ENCODE measurements at regions of chr1 and their contacts with region 1.

Region 1: GRCh38 chr1:162035241-162035640 is 11.6 kb upstream of the OLFML2B start:
- DNase-seq: no peak
- H3K4me3 ChIP-seq: no peak overlapping the region
- H3K27me3 ChIP-seq: peaks cover 2% of the 10 kb centered on the region
- CTCF ChIP-seq: no peak

Region 2: DNA sequence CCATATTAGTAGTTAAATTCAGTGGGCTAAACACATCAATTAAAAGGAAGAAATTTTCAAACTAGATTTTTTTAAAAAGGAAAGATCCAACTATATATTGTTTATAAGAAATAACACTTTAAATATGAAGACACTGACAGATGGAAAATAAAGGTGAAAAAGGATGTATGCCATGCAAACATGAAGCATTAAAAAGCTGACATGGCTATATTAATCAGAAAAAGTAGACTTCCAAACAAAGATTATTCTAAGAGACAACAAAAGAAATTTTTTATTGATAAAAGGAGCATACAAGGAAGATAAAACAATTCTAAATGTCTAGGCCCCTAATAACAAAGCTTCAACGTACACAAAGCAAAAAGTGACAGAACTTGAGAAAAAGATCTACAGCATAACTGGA is 177.0 kb before region 1 on chr1:
- CTCF ChIA-PET with region 1: interaction called, 72 read pairs
- POLR2A ChIA-PET with region 1: no interaction called
- DNase-seq: no peak
- H3K4me3 ChIP-seq: no peak overlapping the region
- H3K27me3 ChIP-seq: no peaks in the 10 kb centered on the region
- CTCF ChIP-seq: no peak

Region 3: GRCh38 chr1:161864577-161864976 is 170.7 kb before region 1 on chr1:
- CTCF ChIA-PET with region 1: interaction called, 72 read pairs
- POLR2A ChIA-PET with region 1: no interaction called
- DNase-seq: no peak
- H3K4me3 ChIP-seq: no peak overlapping the region
- H3K27me3 ChIP-seq: no peaks in the 10 kb centered on the region
- CTCF ChIP-seq: peak; percentile 55

Region 4: DNA sequence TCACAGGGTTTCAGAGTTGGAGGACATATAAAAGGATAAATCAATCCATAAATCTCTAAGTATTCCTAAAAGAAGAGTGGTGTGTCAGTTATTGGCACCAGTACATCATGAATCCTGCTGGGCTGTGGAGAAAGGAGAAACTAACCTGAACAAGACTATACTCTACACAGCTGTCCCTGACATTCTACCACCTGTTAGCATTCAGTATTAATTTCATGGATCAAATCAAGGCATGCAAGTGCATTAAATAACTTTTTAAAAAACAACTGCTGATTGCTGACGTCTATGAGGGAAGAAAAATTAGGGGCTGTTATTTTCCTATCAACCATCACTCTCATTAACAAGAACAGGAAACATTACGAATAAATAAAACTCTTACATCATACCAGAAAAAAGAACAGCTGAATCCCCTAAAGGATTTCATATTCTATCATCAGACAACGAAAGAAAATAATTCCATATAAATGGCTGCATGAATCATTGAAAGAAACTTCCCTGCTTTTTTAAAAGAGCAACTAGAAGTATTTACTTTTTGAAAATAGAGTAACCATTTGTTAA is 147.4 kb before region 1 on chr1:
- CTCF ChIA-PET with region 1: interaction called, 7 read pairs
- POLR2A ChIA-PET with region 1: interaction called, 12 read pairs
- DNase-seq: no peak
- H3K4me3 ChIP-seq: no peak overlapping the region
- H3K27me3 ChIP-seq: no peaks in the 10 kb centered on the region
- CTCF ChIP-seq: no peak

Region 5: DNA sequence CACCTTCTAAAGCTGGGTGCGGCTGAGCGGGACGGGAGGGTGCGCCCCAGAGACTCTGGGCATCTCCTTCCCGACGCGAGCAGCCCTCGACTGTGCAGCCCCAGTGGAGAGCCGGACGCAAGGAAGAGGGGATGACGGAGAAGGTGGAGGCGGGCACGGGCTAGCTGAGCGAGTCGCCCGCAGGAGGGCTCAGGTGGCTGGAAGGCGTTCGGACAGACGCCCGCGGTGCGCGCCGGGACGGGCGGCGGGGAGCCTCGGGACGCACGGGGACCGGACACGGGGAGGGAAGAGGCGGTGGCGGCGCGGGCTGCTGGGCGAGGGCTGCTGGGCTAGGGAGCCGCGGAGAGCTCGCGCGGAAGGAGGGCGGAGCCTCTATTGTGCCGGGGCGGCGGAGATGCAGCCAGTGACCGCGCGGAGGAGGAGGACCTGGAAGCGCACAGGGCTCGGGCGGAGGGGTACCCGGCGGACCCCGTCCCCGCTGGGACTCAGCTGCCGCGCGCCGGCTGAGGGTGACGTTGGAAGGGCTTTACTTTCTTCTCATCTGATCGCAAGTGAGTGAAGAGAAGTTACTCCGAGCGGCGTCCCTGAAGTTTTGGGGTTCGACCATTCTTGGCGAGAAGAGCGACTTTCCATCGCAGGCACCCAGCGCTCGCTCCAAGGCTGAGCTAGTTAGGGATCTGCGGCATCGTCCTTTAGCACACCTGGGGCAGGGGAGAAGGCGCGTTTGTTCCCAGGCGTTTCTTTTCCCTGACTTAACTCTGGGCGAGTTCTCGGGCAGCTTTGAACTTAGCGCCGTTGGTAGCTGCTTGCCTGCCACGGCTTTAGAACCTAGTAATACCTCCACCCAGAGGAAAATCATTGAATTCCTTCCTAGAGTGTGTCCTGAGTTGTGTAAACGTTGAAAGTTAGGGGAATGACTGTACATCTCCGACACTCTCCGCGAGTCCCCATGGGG is 11.4 kb before region 1 on chr1 and contains the start of gene OLFML2B:
- CTCF ChIA-PET with region 1: interaction called, 16 read pairs
- POLR2A ChIA-PET with region 1: no interaction called
- DNase-seq: peak; percentile 55
- H3K4me3 ChIP-seq: peak within 1 kb of the TSS; percentile 53
- H3K27me3 ChIP-seq: no peaks in the 10 kb centered on the region; the same call in 1 of the 2 replicates
- CTCF ChIP-seq: peak; percentile 51
- polyA plus RNA-seq, gene OLFML2B: 1.6 and 3.5 TPM in 2 replicates

Region 6: DNA sequence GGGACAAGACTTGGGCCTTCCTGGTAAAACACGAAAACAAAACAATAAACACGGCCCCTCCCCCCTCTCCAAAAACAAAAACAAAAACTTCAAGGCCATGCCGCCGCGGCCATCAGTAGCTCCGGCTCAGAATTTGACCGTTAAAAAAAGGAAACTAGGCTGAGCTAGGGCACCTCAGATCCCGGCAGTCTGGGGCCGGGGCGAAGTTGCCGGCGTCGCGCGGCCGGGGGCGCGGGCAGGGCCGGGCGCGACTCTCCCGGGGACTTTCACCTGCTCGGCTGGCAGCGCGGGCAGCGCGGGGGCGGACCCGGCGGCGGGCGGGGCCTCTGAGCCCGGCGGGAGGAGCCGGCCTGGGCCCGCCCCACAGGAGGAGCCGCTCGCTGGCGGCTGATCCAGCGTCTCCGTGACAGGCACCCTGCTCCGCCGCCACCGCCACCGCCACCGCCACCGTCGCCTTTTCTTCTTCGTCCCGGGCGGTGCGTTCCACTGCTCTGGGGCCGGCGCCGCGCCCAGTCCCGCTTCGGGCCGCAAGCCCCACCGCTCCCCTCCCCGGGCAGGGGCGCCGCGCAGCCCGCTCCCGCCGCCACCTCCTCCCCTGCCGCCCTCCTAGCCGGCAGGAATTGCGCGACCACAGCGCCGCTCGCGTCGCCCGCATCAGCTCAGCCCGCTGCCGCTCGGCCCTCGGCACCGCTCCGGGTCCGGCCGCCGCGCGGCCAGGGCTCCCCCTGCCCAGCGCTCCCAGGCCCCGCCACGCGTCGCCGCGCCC is 34.3 kb after region 1 on chr1 and contains the start of gene NOS1AP:
- CTCF ChIA-PET with region 1: no interaction called
- POLR2A ChIA-PET with region 1: no interaction called
- DNase-seq: no peak
- H3K4me3 ChIP-seq: peak within 1 kb of the TSS; percentile 61
- H3K27me3 ChIP-seq: peaks cover 8% of the 10 kb centered on the region
- CTCF ChIP-seq: no peak
- polyA plus RNA-seq, gene NOS1AP: 0.39 and 0.50 TPM in 2 replicates

Region 7: DNA sequence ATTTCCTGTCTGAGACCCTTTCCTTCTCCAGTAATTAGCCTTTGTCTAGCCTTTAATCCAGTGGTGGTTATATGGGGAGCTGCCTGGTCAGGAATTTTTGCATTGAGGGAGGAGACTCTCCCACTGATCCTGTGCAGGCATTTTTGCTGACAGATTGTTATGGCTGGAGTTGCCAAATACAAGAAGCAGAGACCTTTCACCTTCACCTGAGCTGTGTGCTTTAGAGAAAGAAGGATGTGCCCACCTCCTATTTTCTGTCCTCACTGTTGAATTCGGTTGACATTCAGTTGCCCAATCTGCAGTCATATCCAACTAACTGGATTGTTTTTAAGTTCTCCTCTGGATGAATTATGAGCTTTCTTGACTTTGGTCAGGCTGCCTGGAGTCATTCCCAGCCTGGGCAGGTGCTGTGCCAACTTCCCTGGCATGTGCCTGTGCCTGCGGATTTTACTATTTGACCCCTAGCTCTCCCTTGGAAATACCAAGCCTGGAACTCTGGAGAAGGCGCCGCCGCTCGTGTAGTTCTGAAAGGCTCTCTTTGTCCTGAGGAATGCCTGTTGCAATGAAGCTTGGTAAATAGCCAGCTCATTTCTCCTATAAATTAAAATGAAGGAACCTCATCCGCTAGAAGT is 178.2 kb after region 1 on chr1:
- CTCF ChIA-PET with region 1: no interaction called
- POLR2A ChIA-PET with region 1: no interaction called
- DNase-seq: no peak
- H3K4me3 ChIP-seq: no peak overlapping the region
- H3K27me3 ChIP-seq: peaks cover 1% of the 10 kb centered on the region
- CTCF ChIP-seq: no peak